Heart right ventricle (tissue), 16 donors: ENCODE measurements at regions of chr1 and their contacts with region 1.

Region 1: DNA sequence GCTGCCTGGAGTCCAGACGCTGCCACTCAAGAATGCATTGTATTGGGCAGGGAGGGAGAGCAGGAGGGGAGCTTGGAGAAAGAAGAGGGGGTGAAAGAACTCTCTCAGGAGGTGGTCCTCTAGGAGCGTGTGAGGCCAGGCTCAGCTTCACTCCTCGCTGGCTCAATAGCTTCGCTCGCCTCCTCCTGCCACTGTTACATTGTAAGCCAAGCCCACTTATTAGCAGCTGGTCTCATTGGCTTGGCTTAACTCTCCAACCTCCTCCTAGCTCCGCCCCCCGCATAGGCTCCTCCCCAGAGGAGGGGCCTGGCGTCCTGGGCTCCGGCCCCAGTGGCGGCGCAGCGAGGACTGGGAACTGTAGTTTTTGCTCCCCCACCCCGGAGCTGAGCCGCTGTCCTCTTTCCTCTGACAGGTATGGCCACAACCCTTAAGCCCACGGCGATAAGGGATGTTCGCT is at the start of gene KCNN3:
- DNase-seq: peak; percentile 93
- ATAC-seq: peak; percentile 96 to 98 (median 98)
- H3K4me3 ChIP-seq: peak within 1 kb of the TSS; percentile 11 to 66 (median 56)
- H3K27ac ChIP-seq: peak within 1 kb of the TSS in 8 of 10 donors; percentile 23 to 68 (median 40)
- H3K4me1 ChIP-seq: peaks cover 8 to 47% (median 38%) of the 10 kb centered on the region in 9 donors
- H3K27me3 ChIP-seq: peaks cover 0 to 26% (median 0%) of the 10 kb centered on the region in 7 donors
- CTCF ChIP-seq: no peak
- total RNA-seq, gene KCNN3: 0.52 to 5.9 (median 2.7) TPM

Region 2: GRCh38 chr1:154736841-154737240 is 133.3 kb before region 1 on chr1:
- intact Hi-C with region 1: no loop called
- DNase-seq: no peak
- ATAC-seq: no peak
- H3K4me3 ChIP-seq: no peak overlapping the region
- H3K27ac ChIP-seq: no peak overlapping the region
- H3K4me1 ChIP-seq: peaks cover under 1 to 28% (median 10%) of the 10 kb centered on the region in 9 donors
- H3K27me3 ChIP-seq: no peaks in the 10 kb centered on the region
- CTCF ChIP-seq: no peak

Region 3: DNA sequence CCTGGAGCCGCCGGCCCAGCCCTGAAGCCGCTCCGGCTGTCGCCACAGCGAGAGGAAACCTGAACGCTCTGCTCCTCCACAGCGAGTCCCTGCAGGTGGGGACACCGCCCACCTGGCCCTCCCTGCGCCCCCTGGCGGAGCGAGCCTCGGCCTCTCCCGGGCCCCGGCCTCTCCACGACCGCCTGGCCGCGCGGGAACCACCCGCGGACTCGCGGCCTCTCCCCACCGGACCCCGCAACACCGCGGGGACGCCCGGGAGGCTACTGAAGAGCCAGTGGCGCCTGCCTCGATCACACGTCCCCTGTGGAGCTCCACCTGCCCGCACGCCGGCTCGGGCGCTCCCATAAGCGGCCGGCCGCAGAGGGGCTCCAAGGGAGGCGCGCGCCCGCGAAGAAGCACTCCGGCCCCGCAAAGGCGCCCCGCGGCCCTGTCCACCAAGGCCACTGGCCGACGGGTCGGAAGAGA is 109.6 kb before region 1 on chr1:
- intact Hi-C with region 1: loop called in 6 of 10 experiments (anchors 2 to 5 kb)
- DNase-seq: peak; percentile 46 to 77
- ATAC-seq: peak; percentile 75 to 91 (median 86)
- H3K4me3 ChIP-seq: peak overlapping the region; percentile 16 to 61 (median 48)
- H3K27ac ChIP-seq: peak overlapping the region in 4 of 10 donors; percentile 22 to 45 (median 42)
- H3K4me1 ChIP-seq: peaks cover 0 to 35% (median 23%) of the 10 kb centered on the region in 9 donors
- H3K27me3 ChIP-seq: peaks cover 0 to 60% (median 3%) of the 10 kb centered on the region in 7 donors
- CTCF ChIP-seq: peak; percentile 62 to 88 (median 79)

Region 4: DNA sequence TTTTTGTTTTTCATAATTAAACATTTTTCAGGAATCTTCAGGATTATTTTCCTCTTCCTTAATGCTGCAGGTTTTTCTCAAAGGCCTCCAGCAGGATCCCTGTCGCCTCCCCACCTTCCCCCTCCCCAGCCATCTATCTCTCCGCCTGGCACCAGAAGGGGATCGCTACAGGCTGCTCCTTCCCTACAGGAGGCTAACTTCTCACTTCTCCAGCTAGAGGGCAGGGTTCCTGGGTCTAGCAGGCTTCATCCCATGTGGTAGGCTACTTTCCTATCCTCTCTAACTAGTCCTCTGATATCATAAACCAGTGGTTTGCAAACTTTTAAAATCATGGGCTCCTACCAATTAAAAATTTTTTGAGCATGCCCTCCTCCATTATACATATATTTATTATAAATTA is 104.2 kb before region 1 on chr1:
- intact Hi-C with region 1: loop called in 8 of 10 experiments (anchors 2 to 10 kb)
- DNase-seq: no peak
- ATAC-seq: peak in 2 of 8 donors; percentile 34 to 45
- H3K4me3 ChIP-seq: no peak overlapping the region
- H3K27ac ChIP-seq: no peak overlapping the region
- H3K4me1 ChIP-seq: peaks cover 4 to 26% (median 15%) of the 10 kb centered on the region in 9 donors
- H3K27me3 ChIP-seq: peaks cover 0 to 39% (median 3%) of the 10 kb centered on the region in 7 donors
- CTCF ChIP-seq: peak in 7 of 9 donors; percentile 23 to 50 (median 37)

Region 5: GRCh38 chr1:154772606-154773506 is 97.3 kb before region 1 on chr1:
- intact Hi-C with region 1: loop called in 7 of 10 experiments (anchors 5 to 10 kb)
- DNase-seq: no peak
- ATAC-seq: no peak
- H3K4me3 ChIP-seq: no peak overlapping the region
- H3K27ac ChIP-seq: no peak overlapping the region
- H3K4me1 ChIP-seq: peaks cover 0 to 21% (median 7%) of the 10 kb centered on the region in 9 donors
- H3K27me3 ChIP-seq: no peaks in the 10 kb centered on the region
- CTCF ChIP-seq: peak in 1 of 9 donors; percentile 27

Region 6: DNA sequence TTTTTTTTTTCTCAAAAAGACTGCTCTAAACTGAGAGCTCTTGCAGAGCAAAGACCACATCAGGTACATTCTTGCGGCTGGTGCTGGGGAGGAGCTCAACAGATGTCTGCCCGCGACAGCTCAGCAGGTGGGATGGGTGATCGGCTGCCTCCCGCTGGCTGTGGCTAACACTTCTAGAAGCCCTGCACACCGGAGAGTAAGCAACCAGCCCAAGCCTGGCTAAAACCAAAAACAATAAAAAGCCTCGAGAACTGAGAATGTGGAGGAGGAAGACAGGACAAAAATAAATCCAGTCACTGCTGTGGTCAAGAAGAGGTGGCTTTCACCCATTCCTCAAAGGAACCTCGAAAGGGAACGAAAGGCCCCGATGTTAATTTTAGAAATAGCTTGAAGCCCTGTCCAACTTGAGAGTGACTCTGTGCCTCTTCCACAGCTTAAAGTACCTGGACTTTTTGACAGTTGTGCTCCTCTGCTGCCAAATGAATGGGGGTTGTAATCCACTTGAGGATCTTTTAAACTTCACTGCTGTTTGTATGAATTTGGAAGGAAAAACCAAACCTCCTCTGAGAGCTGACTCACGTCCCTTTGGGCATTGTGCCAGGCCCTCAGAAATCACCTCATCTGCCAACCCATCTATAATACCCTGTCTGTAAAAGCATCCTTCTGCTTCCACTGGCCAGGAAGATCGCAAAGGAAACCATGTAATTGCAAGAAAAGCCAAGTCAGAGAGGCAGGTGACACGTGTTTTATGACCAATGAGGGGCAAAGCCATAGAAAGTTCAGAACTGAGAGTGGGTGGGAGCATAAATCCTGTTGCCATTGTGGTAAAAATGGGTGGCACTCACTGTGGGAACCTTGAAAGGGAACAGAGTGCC is 78.6 kb before region 1 on chr1:
- intact Hi-C with region 1: loop called in 1 of 10 experiments (anchors 5 kb)
- DNase-seq: peak in 1 of 2 donors; percentile 38
- ATAC-seq: peak in 7 of 8 donors; percentile 31 to 78 (median 51)
- H3K4me3 ChIP-seq: no peak overlapping the region
- H3K27ac ChIP-seq: peak overlapping the region in 3 of 10 donors; percentile 2 to 31 (median 13)
- H3K4me1 ChIP-seq: peaks cover 0 to 16% (median 10%) of the 10 kb centered on the region in 9 donors
- H3K27me3 ChIP-seq: peaks cover 0 to 19% (median 0%) of the 10 kb centered on the region in 7 donors
- CTCF ChIP-seq: no peak

Region 7: DNA sequence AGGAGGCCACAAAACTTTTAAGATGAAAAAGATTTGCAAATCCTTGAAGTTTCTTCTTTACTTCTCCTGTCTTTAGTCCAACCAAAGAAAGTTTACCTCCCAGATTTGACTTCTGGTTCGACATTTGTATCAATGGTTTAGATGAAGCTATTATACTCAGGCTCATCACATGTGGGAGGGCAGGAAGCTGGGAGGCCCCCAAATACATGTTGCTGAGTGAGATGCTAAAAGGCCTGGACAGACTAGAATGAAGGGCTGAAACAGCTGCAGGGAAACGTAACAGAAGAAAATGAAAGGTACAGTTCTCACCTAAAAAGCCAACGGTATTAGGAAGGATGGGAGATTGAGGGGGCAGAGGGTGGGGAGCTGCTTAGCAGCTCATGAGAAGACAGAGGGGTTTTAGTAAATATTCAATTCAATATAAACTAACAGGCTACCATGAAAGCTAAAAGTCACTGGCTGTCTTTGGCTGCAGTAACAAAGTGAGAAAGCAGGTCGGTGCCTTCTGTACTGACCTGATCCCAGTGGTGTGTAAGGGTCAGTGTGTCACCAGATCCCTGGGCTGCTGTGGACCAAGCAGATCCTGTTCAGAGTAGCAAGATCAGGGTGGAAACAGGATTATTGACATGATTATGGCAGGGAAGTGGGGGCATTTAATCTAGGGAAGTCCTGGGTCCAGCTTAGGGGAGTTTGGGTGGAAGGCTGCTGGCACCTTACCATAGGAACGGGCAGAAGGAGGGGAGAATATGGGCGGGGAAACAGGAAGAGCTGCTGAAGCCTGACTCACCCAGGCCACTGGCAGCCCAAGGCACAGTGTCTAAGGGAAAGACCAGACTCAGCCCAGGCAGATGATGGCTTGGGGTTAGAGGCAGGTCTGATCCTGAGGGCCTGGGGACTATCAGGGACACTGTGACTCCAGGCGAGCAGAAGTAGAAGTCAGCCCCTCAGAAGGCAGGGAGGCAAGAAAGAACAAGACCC is 60.4 kb before region 1 on chr1:
- intact Hi-C with region 1: loop called in 1 of 10 experiments (anchors 5 kb)
- DNase-seq: no peak
- ATAC-seq: peak in 6 of 8 donors; percentile 29 to 65 (median 47)
- H3K4me3 ChIP-seq: no peak overlapping the region
- H3K27ac ChIP-seq: peak overlapping the region in 8 of 10 donors; percentile 56 to 77 (median 68)
- H3K4me1 ChIP-seq: peaks cover 21 to 76% (median 51%) of the 10 kb centered on the region in 9 donors
- H3K27me3 ChIP-seq: peaks cover 0 to 5% (median 0%) of the 10 kb centered on the region in 7 donors
- CTCF ChIP-seq: no peak